Esophagus squamous epithelium (tissue), 5 donors: ENCODE measurements at regions of chr12 and their contacts with region 1.

Region 1: GRCh38 chr12:7995266-7995963 is 37.1 kb upstream of the FOXJ2 start:
- DNase-seq: peak; percentile 61
- H3K4me3 ChIP-seq: no peak overlapping the region
- H3K27ac ChIP-seq: peak overlapping the region in 2 of 4 donors; percentile 49 to 61
- H3K4me1 ChIP-seq: peaks cover 0 to 8% (median 0%) of the 10 kb centered on the region in 3 donors
- H3K27me3 ChIP-seq: no peaks in the 10 kb centered on the region
- CTCF ChIP-seq: peak; percentile 76 to 91 (median 89)
- POLR2A ChIP-seq: no peak

Region 2: DNA sequence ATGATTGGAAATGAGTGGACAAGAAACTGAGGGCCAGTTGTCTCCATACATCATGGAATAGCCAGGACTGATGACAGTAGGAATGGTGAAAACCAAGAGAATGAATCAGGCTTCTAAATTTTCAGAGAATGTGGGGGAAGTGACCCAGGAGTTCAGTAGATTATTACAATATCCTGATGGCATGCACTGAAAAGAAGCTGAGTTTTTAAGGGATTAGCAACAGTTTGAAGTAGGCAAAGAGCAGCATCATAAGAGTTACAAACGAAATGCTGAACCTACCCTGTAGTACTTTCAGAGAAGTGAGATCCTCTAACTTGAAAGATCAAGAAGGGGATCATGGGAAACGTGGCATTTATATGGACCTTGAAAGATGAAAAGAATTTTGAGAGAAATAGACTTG is 135.9 kb before region 1 on chr12:
- intact Hi-C with region 1: loop called (anchors 5 kb)
- DNase-seq: no peak
- H3K4me3 ChIP-seq: no peak overlapping the region
- H3K27ac ChIP-seq: no peak overlapping the region
- H3K4me1 ChIP-seq: peaks cover 0 to 11% (median 3%) of the 10 kb centered on the region in 3 donors
- H3K27me3 ChIP-seq: peaks cover 0 to 16% (median 0%) of the 10 kb centered on the region in 4 donors
- CTCF ChIP-seq: no peak
- POLR2A ChIP-seq: no peak

Region 3: GRCh38 chr12:7933255-7933729 is 62.1 kb before region 1 on chr12:
- intact Hi-C with region 1: loop called (anchors 10 kb)
- DNase-seq: no peak
- H3K4me3 ChIP-seq: peak overlapping the region in 2 of 4 donors; percentile 51 to 68
- H3K27ac ChIP-seq: peak overlapping the region; percentile 3 to 87 (median 82)
- H3K4me1 ChIP-seq: peaks cover 0 to 40% (median 3%) of the 10 kb centered on the region in 3 donors
- H3K27me3 ChIP-seq: no peaks in the 10 kb centered on the region
- CTCF ChIP-seq: peak; percentile 46 to 77 (median 68)
- POLR2A ChIP-seq: peak in 2 of 4 donors; percentile 21 to 59